GM12878 (cell line): ENCODE measurements at regions of chr3 and their contacts with region 1.

Region 1: GRCh38 chr3:28317438-28318022 is 31.0 kb upstream of the ZCWPW2 start:
- DNase-seq: no peak
- ATAC-seq: peak; percentile 96
- H3K4me3 ChIP-seq: no peak overlapping the region
- H3K27ac ChIP-seq: no peak overlapping the region
- H3K4me1 ChIP-seq: no peaks in the 10 kb centered on the region
- H3K27me3 ChIP-seq: no peaks in the 10 kb centered on the region
- CTCF ChIP-seq: peak; percentile 58 to 61 (median 59); a peak in 5 of 6 replicates
- EP300 ChIP-seq: no peak
- POLR2A ChIP-seq: no peak
- RAD21 ChIP-seq: peak; percentile 43; the same call in 1 of the 2 replicates

Region 2: DNA sequence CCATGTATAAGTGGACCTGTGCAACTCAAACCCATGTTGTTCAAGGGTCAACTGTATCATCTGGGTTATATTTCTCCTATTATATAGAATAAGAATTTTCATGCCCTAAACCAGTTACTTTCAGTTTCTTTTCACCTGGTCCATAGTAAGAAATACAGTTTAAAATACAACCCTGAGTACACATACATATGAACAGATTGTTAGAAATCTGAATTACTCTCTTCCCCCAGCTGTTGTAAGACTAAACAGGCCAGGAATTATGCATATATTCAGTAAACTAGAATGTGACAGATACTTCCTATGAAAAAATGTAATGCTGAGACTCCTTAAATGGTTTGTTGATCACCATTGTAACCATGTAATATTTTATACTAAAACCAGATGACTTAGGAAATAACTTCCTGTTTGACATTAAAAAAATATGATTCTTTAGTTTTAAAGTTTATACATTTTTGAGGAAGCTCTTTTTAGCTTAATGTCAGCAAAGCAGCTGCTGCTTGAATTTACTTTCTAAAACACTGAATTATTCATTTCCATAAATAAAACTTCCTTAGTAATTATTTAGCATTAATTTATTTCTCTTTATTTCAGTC is 21.5 kb before region 1 on chr3:
- CTCF ChIA-PET with region 1: interaction called, 12 read pairs
- POLR2A ChIA-PET with region 1: no interaction called
- RAD21 ChIA-PET with region 1: interaction called, 5 read pairs
- SMC1A ChIA-PET with region 1: interaction called, 4 read pairs
- in situ Hi-C with region 1: no loop called
- intact Hi-C with region 1: no loop called
- DNase-seq: no peak
- ATAC-seq: peak; percentile 62
- H3K4me3 ChIP-seq: no peak overlapping the region
- H3K27ac ChIP-seq: no peak overlapping the region; the same call in 1 of the 2 replicates
- H3K4me1 ChIP-seq: no peaks in the 10 kb centered on the region
- H3K27me3 ChIP-seq: no peaks in the 10 kb centered on the region
- CTCF ChIP-seq: no peak
- EP300 ChIP-seq: no peak
- POLR2A ChIP-seq: no peak
- RAD21 ChIP-seq: no peak

Region 3: GRCh38 chr3:29128001-29128400 is 810.5 kb after region 1 on chr3:
- CTCF ChIA-PET with region 1: no interaction called
- POLR2A ChIA-PET with region 1: no interaction called
- RAD21 ChIA-PET with region 1: no interaction called
- SMC1A ChIA-PET with region 1: no interaction called
- in situ Hi-C with region 1: no loop called
- intact Hi-C with region 1: no loop called
- DNase-seq: no peak
- ATAC-seq: no peak
- H3K4me3 ChIP-seq: no peak overlapping the region
- H3K27ac ChIP-seq: no peak overlapping the region
- H3K4me1 ChIP-seq: no peaks in the 10 kb centered on the region
- H3K27me3 ChIP-seq: no peaks in the 10 kb centered on the region
- CTCF ChIP-seq: no peak
- EP300 ChIP-seq: no peak
- POLR2A ChIP-seq: no peak
- RAD21 ChIP-seq: no peak